Panc1 (cell line): ENCODE measurements at regions of chr1 and their contacts with region 1.

Region 1: DNA sequence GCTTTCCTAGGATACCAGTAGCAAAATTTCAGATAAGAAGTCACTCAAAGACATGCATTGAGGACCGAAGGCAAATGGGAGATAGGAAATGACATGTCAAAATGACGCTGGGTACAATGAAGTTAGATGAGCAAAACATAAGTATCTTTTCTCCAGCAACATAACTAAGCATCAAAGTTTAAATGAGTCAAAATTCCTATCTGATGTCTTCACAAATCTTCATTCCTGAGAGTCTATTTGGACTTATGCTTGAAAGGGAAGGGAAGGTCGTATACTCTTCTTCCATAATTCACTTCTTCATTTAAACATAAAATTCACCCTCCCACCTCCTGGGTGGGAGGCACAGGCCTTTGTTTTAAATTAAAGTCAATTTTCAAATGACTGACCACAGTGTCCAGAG is 4.1 kb upstream of the TMEM81 start:
- DNase-seq: no peak
- ATAC-seq: no peak
- H3K4me3 ChIP-seq: no peak overlapping the region
- H3K27ac ChIP-seq: no peak overlapping the region
- H3K4me1 ChIP-seq: no peaks in the 10 kb centered on the region
- H3K27me3 ChIP-seq: no peaks in the 10 kb centered on the region
- CTCF ChIP-seq: no peak

Region 2: GRCh38 chr1:204961765-204962419 is 126.4 kb before region 1 on chr1:
- CTCF ChIA-PET with region 1: no interaction called
- POLR2A ChIA-PET with region 1: no interaction called
- in situ Hi-C with region 1: no loop called
- intact Hi-C with region 1: no loop called
- DNase-seq: no peak
- ATAC-seq: no peak
- H3K4me3 ChIP-seq: no peak overlapping the region
- H3K27ac ChIP-seq: no peak overlapping the region
- H3K4me1 ChIP-seq: no peaks in the 10 kb centered on the region
- H3K27me3 ChIP-seq: no peaks in the 10 kb centered on the region; the same call in 1 of the 2 replicates
- CTCF ChIP-seq: no peak

Region 3: GRCh38 chr1:205013683-205014367 is 74.5 kb before region 1 on chr1:
- CTCF ChIA-PET with region 1: no interaction called
- POLR2A ChIA-PET with region 1: interaction called, 10 read pairs
- in situ Hi-C with region 1: no loop called
- intact Hi-C with region 1: no loop called
- DNase-seq: no peak
- ATAC-seq: no peak
- H3K4me3 ChIP-seq: no peak overlapping the region
- H3K27ac ChIP-seq: no peak overlapping the region
- H3K4me1 ChIP-seq: no peaks in the 10 kb centered on the region
- H3K27me3 ChIP-seq: no peaks in the 10 kb centered on the region
- CTCF ChIP-seq: no peak